Right cardiac atrium (tissue), 5 donors: ENCODE measurements at regions of chr9 and their contacts with region 1.

Region 1: DNA sequence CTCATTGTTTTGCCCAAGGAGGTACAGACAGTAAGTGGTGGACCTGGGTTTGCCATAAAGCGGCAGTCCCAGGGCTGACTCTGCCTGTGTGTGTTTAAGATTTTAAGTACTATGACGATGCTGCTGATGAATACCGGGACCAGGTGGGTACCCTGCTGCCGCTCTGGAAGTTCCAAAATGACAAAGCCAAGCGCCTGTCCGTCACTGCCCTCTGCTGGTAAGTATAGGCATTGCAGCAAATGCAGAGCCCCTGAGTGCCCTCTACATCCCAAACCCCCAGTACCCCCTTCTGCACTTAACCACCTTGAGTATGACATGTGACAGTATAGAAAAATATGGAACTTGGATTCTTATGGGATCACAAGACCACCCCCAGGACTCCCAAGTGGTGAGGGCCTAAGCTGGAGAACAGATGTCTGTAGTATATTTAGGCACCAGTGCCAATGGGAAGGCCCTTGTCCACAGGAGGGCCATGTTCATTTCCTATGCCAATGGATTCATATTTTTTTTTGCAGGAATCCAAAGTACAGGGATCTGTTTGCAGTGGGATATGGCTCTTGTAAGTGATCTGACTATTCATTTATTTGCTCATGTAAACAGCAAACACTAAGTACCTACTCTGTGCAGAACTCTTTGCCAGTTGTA is 22.0 kb downstream of the ENHO start:
- DNase-seq: peak; percentile 44 to 77 (median 73)
- ATAC-seq: peak; percentile 20 to 52
- H3K4me3 ChIP-seq: no peak overlapping the region
- H3K27ac ChIP-seq: no peak overlapping the region
- H3K4me1 ChIP-seq: peaks cover 6% of the 10 kb centered on the region
- H3K27me3 ChIP-seq: no peaks in the 10 kb centered on the region

Region 2: DNA sequence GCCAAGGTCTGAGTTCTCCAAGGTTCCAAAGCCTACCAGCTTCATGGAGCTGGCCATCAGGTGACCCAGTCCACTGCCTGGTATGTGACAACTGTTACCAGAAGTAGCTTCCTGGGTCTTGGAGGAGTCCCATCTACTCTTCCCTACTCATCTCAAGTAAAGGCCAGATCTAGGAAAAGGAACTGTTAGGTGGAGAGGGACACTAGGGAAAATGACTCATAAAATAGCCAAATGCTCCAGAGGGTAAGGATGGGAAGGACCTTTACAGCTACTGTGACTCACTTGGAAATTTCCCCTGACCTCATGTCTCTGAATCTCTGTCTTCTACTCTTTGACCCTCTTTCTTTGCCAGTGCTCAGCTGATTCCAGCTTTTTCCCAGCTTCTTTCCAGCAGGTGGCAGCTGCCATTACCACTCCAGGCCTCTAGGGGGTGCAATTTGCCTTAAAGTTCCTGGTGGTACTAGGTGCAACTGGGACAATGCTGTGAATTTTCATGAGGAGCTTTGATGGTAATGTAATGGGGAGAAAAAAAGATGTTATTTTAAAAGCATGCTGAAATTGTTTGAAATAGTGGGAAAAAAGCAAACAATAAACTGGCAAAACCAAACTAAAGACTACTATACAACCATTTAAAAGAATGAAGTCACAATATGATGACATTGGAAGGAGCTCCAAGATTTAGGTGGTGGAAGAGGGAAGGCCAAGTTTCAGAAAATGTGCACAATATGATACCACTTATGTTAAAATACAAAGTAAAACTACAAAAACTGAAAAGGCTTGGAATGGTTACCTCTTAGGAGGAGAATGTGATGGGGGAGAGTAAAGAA is 97.0 kb before region 1 on chr9:
- intact Hi-C with region 1: loop called in 3 of 4 experiments (anchors 5 to 10 kb)
- DNase-seq: peak; percentile 56 to 85 (median 82)
- ATAC-seq: peak in 1 of 2 donors; percentile 60
- H3K4me3 ChIP-seq: no peak overlapping the region
- H3K27ac ChIP-seq: no peak overlapping the region
- H3K4me1 ChIP-seq: no peaks in the 10 kb centered on the region
- H3K27me3 ChIP-seq: no peaks in the 10 kb centered on the region

Region 3: GRCh38 chr9:34417734-34418133 is 83.0 kb before region 1 on chr9:
- intact Hi-C with region 1: no loop called
- DNase-seq: no peak
- ATAC-seq: no peak
- H3K4me3 ChIP-seq: no peak overlapping the region
- H3K27ac ChIP-seq: no peak overlapping the region
- H3K4me1 ChIP-seq: peaks cover 8% of the 10 kb centered on the region
- H3K27me3 ChIP-seq: no peaks in the 10 kb centered on the region

Region 4: DNA sequence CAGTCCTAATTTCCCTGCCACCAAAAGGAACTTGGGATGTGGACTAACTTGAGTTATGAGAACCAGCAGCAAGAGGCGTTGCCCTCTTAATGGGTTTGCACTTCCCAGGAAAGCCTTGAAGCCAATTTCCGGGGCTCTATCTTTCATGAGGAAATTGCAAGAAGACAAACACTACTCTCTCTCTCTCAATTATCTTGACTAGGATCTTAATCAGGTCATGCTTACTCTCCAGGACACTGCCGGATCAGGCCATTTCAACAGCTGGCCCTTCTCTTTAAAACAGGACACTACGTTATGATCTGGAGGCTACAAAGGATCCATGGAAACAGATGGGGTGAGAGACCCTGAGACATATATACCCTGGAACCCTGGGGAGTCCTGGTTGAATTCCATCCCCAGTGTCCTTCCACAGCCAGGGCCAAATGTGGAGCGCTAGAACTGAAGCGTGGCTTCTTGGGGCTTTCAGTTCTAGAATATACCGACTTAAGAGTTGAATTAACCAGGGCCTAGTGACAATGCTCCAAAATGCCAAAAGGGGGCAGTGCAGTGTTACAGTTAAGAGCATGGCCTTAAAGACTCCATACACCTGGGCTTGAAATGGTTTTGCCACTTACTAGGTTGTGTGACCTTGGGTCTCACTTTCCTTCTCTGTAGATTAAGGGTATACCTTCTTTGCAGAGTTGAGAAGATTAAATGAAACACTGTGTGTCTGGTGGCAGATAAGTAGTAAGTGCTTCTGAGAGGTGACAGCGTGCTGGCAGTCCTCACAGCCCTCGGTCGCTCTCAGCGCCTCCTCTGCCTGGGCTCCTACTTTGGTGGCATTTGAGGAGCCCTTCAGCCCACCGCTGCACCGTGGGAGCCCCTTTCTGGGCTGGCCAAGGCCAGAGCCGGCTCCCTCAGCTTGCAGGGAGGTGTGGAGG is 63.5 kb before region 1 on chr9:
- intact Hi-C with region 1: loop called (anchors 2 to 5 kb)
- DNase-seq: peak in 2 of 3 donors; percentile 20 to 66
- ATAC-seq: peak; percentile 76 to 78
- H3K4me3 ChIP-seq: no peak overlapping the region
- H3K27ac ChIP-seq: no peak overlapping the region
- H3K4me1 ChIP-seq: peaks cover 6% of the 10 kb centered on the region
- H3K27me3 ChIP-seq: no peaks in the 10 kb centered on the region

Region 5: GRCh38 chr9:34446468-34446891 is 54.3 kb before region 1 on chr9:
- intact Hi-C with region 1: loop called in 1 of 4 experiments (anchors 5 kb)
- DNase-seq: no peak
- ATAC-seq: peak in 1 of 2 donors; percentile 57
- H3K4me3 ChIP-seq: no peak overlapping the region
- H3K27ac ChIP-seq: no peak overlapping the region
- H3K4me1 ChIP-seq: peaks cover 18% of the 10 kb centered on the region
- H3K27me3 ChIP-seq: no peaks in the 10 kb centered on the region

Region 6: GRCh38 chr9:34546834-34547827 is 46.4 kb after region 1 on chr9:
- intact Hi-C with region 1: loop called in 1 of 4 experiments (anchors 5 kb)
- DNase-seq: peak; percentile 75 to 88 (median 82)
- ATAC-seq: peak; percentile 59 to 73
- H3K4me3 ChIP-seq: no peak overlapping the region
- H3K27ac ChIP-seq: no peak overlapping the region
- H3K4me1 ChIP-seq: no peaks in the 10 kb centered on the region
- H3K27me3 ChIP-seq: no peaks in the 10 kb centered on the region

Region 7: DNA sequence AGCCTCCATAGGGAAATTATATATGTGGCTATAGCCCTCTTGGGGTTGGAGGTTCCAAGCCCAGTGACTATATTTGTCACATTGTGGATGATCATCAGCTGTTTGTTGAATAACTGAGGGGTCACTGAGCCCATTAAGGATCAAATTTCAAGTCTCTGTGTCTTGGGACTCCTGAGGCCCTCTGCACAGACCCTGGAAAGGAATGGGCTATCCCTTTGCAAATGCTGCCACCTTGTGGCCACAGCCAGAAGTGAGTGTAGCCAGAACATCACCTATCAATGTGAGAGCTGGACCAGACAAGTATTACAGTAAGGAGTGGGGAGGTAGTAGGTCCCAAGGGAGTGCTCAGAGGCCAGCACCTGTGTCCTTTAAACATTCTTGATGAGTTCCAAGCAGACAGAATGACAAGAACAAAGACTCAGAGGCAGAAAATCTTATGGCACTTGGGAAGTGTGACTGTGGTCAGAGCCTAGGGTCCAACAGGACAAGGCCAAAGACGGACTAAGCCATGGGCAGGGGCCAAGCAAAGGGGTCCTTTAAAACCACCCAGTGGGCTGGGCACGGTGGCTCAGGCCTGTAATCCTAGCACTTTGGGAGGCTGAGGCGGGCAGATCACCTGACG is 103.0 kb after region 1 on chr9:
- intact Hi-C with region 1: loop called in 1 of 4 experiments (anchors 5 kb)
- DNase-seq: peak; percentile 79 to 96 (median 90)
- ATAC-seq: peak; percentile 86 to 89
- H3K4me3 ChIP-seq: no peak overlapping the region
- H3K27ac ChIP-seq: no peak overlapping the region
- H3K4me1 ChIP-seq: peaks cover 3% of the 10 kb centered on the region
- H3K27me3 ChIP-seq: no peaks in the 10 kb centered on the region